ENCODE measurements at regions of chr18 and their contacts with region 1.

Region 1: GRCh38 chr18:26941584-26941983 is 76.1 kb upstream of the AQP4 start:
- DNase-seq: no peak
- ATAC-seq: no peak
- H3K4me3 ChIP-seq: no peak overlapping the region
- H3K27ac ChIP-seq: no peak overlapping the region
- H3K4me1 ChIP-seq: no peaks in the 10 kb centered on the region
- H3K27me3 ChIP-seq: no peaks in the 10 kb centered on the region
- CTCF ChIP-seq: no peak
- EP300 ChIP-seq: no peak
- POLR2A ChIP-seq: no peak
- RAD21 ChIP-seq: no peak

Region 2: GRCh38 chr18:26971409-26971808 is 29.8 kb after region 1 on chr18:
- CTCF ChIA-PET with region 1: no interaction called
- POLR2A ChIA-PET with region 1: no interaction called
- RAD21 ChIA-PET with region 1: no interaction called
- SMC1A ChIA-PET with region 1: no interaction called
- in situ Hi-C with region 1: no loop called
- intact Hi-C with region 1: loop called (anchors 1 kb)
- DNase-seq: no peak
- ATAC-seq: no peak
- H3K4me3 ChIP-seq: no peak overlapping the region
- H3K27ac ChIP-seq: no peak overlapping the region
- H3K4me1 ChIP-seq: no peaks in the 10 kb centered on the region
- H3K27me3 ChIP-seq: no peaks in the 10 kb centered on the region
- CTCF ChIP-seq: no peak
- EP300 ChIP-seq: no peak
- POLR2A ChIP-seq: no peak
- RAD21 ChIP-seq: no peak